Mammary epithelial cell (primary cell): ENCODE measurements at regions of chr16 and their contacts with region 1.

Region 1: DNA sequence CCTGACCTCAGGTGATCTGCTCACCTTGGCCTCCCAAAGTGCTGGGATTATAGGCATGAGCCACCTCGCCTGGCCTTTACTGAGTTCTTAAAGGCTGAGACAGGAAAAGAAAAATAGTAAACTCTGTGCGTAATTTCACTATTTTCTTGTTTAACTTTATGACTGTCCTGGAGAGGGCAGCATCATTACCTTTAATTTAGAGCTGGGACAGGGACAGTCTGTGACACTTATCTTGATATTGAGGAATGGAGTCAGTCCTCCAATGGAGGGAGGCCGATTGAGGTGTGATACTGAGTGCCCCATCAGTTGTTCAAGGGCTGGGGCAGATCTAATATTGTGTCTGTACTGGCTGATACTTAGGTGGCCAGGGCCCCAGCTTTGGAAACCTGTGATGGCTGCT is 21.5 kb upstream of the SPN start:
- DNase-seq: no peak
- H3K4me3 ChIP-seq: no peak overlapping the region
- H3K27ac ChIP-seq: no peak overlapping the region
- H3K4me1 ChIP-seq: no peaks in the 10 kb centered on the region
- H3K27me3 ChIP-seq: no peaks in the 10 kb centered on the region
- CTCF ChIP-seq: no peak

Region 2: GRCh38 chr16:29653471-29653870 is 11.9 kb after region 1 on chr16:
- CTCF ChIA-PET with region 1: interaction called, 18 read pairs
- dilution Hi-C with region 1: no loop called
- in situ Hi-C with region 1: no loop called
- intact Hi-C with region 1: no loop called
- DNase-seq: no peak
- H3K4me3 ChIP-seq: no peak overlapping the region
- H3K27ac ChIP-seq: no peak overlapping the region
- H3K4me1 ChIP-seq: no peaks in the 10 kb centered on the region
- H3K27me3 ChIP-seq: peaks cover 2% of the 10 kb centered on the region
- CTCF ChIP-seq: no peak